ENCODE measurements at regions of chr16 and their contacts with region 1.

Region 1: GRCh38 chr16:57244767-57245471 is at the start of gene ARL2BP:
- DNase-seq: peak; percentile 98
- ATAC-seq: peak; percentile 92
- total RNA-seq, gene ARL2BP: 32.3 to 35.3 TPM

Region 2: GRCh38 chr16:57091975-57092785 is 152.7 kb before region 1 on chr16 and contains the start of gene CPNE2:
- intact Hi-C with region 1: loop called in 1 of 2 experiments (anchors 5 kb)
- DNase-seq: peak; percentile 71 to 72
- ATAC-seq: peak; percentile 68
- total RNA-seq, gene CPNE2: 73.2 to 91.0 TPM

Region 3: GRCh38 chr16:57300387-57301125 is 55.6 kb after region 1 on chr16:
- intact Hi-C with region 1: no loop called
- DNase-seq: peak; percentile 98 to 99
- ATAC-seq: peak; percentile 88

Region 4: GRCh38 chr16:57341441-57342303 is 96.8 kb after region 1 on chr16:
- intact Hi-C with region 1: no loop called
- DNase-seq: peak; percentile 61 to 77
- ATAC-seq: peak; percentile 94

Measured in left colon (tissue), 2 donors.